A549 (cell line): ENCODE measurements at regions of chr2 and their contacts with region 1.

Region 1: DNA sequence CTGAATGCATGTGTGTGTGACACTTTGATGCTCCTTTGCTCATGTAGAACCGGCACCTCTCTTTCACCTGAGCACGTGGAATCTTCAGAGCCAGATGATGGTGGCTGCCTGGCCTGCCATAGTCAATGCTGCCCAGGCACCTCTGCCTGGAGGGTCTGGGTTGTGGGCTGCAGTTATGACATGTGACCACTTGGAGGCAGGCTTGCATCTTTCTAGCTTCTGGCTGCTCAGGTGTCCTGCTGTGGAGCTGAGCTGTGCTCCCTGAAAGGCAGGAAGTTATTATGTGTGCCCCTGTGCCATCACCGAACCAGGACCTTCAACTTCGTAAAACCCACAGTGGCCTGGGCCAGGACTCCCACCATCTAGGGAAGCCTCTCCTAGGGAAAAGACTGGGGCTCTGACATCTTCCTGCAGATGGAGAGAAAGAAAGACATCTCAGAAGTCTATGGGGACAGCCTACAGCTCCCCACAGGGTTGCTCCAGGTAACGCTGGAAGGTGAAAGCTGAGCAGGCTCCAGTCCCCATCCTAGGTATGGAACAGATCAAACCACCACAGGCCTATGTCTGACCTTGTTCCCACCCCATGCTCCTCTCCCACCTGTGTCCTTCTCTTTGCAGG is 30.2 kb downstream of the PSD4 start:
- DNase-seq: peak; percentile 82 to 86
- ATAC-seq: peak; percentile 71 to 80
- H3K4me3 ChIP-seq: no peak overlapping the region
- H3K27ac ChIP-seq: peak overlapping the region; percentile 92 to 97
- H3K4me1 ChIP-seq: peaks cover 77% of the 10 kb centered on the region
- CTCF ChIP-seq: peak; percentile 96
- EP300 ChIP-seq: no peak
- POLR2A ChIP-seq: no peak
- RAD21 ChIP-seq: peak; percentile 99

Region 2: DNA sequence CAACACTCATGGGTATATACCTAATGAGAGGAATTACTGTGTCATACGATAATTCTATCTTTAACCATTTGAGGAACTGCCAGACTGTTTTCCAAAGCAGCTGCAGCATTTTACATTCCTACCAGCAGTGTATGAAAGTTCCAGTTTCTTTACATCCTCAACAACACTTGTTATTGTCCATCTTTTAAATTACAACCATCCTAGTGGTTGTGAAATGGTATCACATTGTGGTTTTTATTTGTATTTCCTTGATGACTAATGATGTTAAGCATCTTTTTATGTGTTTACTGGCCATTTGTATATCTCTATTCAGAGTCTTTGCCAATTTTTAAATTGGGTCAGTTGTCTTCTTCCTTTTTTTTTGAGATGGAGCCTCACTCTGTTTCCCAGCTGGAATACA is 435.6 kb before region 1 on chr2:
- CTCF ChIA-PET with region 1: no interaction called
- POLR2A ChIA-PET with region 1: no interaction called
- DNase-seq: peak in 1 of 2 experiments; percentile 50
- ATAC-seq: no peak
- H3K4me3 ChIP-seq: no peak overlapping the region
- H3K27ac ChIP-seq: no peak overlapping the region
- H3K4me1 ChIP-seq: peaks cover 14% of the 10 kb centered on the region; the same call in 2 of the 3 replicates
- CTCF ChIP-seq: no peak
- EP300 ChIP-seq: no peak
- POLR2A ChIP-seq: no peak
- RAD21 ChIP-seq: no peak

Region 3: DNA sequence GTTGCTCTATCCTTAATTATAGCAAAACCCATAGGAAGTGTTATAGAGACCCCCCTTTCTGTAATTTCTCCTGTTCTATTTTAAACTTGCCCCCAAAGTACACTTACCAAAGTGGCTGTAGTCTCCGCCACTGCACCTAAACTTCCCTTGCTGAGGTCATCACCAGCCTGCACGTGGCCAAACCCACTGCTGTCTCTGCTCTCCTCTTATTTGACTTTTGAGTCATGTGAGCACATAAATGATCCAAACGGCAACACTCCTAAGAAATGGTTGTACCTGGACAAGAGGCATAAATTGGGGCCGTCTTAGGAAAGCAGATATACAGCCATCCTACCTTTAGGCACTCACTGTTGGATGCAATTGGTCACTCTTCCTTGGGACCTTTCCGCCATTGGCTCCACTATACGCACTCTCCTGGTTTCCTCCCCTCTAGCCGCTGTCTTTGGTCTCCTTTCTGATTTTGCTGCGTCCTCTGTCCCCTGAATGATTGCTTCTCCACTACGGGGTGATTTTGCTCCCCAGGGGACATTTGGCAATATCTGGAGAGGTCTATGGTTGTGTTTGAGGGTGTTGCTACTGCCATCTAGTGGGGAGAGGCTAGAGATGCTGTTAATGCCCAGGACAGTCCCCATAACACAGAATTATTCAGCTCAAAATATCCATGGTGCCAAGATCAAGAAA is 245.4 kb before region 1 on chr2:
- CTCF ChIA-PET with region 1: no interaction called
- POLR2A ChIA-PET with region 1: no interaction called
- DNase-seq: peak; percentile 48 to 60
- ATAC-seq: peak; percentile 82 to 96
- H3K4me3 ChIP-seq: no peak overlapping the region
- H3K27ac ChIP-seq: no peak overlapping the region
- H3K4me1 ChIP-seq: no peaks in the 10 kb centered on the region
- CTCF ChIP-seq: peak; percentile 82
- EP300 ChIP-seq: no peak
- POLR2A ChIP-seq: no peak
- RAD21 ChIP-seq: peak; percentile 67 to 72

Region 4: DNA sequence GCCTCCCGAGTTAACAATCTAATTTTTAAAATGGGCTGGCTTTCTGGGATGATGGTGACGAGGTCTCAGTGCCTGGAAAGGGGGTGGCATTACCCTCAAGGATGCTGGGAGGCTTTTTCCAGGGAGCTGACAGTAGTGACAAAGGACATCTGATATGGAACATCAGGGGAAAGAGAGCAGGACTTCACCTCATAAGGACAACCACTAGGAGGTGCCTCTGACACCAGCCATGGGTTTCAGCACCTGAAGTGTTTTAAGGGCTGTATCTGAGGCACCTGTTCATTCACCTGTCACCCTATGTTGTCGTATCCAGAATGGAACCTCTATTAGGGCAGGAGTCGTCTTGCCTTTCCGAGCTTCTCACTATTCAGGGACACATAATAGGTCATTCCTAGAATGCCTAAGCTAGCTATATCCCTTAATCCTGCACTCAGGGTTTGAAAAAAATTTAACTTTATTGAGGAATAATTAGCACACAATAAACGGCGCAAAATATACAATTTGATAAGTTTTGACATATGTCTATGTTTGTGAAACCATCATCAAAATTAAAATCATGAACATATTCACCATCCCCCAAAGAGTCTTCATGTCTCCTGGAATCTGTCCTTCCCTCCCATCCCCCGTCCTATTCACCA is 162.0 kb before region 1 on chr2:
- CTCF ChIA-PET with region 1: no interaction called
- POLR2A ChIA-PET with region 1: no interaction called
- DNase-seq: peak in 1 of 2 experiments; percentile 11
- ATAC-seq: peak; percentile 47 to 66; a peak in 4 of 6 replicates
- H3K4me3 ChIP-seq: no peak overlapping the region
- H3K27ac ChIP-seq: no peak overlapping the region
- H3K4me1 ChIP-seq: no peaks in the 10 kb centered on the region
- CTCF ChIP-seq: no peak
- EP300 ChIP-seq: no peak
- POLR2A ChIP-seq: no peak
- RAD21 ChIP-seq: peak in 1 of 2 experiments; percentile 10; a peak in 1 of 5 replicates

Region 5: GRCh38 chr2:113080134-113080533 is 123.9 kb before region 1 on chr2:
- CTCF ChIA-PET with region 1: interaction called, 150 read pairs
- POLR2A ChIA-PET with region 1: interaction called, 7 read pairs
- DNase-seq: peak; percentile 31 to 32
- ATAC-seq: peak; percentile 70 to 91; a peak in 5 of 6 replicates
- H3K4me3 ChIP-seq: no peak overlapping the region
- H3K27ac ChIP-seq: no peak overlapping the region
- H3K4me1 ChIP-seq: peaks cover 3% of the 10 kb centered on the region; the same call in 1 of the 3 replicates
- CTCF ChIP-seq: peak; percentile 80
- EP300 ChIP-seq: no peak
- POLR2A ChIP-seq: no peak
- RAD21 ChIP-seq: peak; percentile 86 to 88

Region 6: GRCh38 chr2:113219889-113220641 is 16.1 kb after region 1 on chr2:
- CTCF ChIA-PET with region 1: interaction called, 28 read pairs
- POLR2A ChIA-PET with region 1: interaction called, 4 read pairs
- DNase-seq: peak; percentile 64 to 92
- ATAC-seq: peak; percentile 54 to 73
- H3K4me3 ChIP-seq: peak overlapping the region; percentile 31
- H3K27ac ChIP-seq: peak overlapping the region; percentile 96
- H3K4me1 ChIP-seq: peaks cover 67% of the 10 kb centered on the region
- CTCF ChIP-seq: no peak
- EP300 ChIP-seq: no peak
- POLR2A ChIP-seq: peak; percentile 62
- RAD21 ChIP-seq: no peak

Region 7: GRCh38 chr2:113233593-113234550 is 29.9 kb after region 1 on chr2:
- CTCF ChIA-PET with region 1: interaction called, 71 read pairs
- POLR2A ChIA-PET with region 1: no interaction called
- DNase-seq: peak; percentile 37 to 52
- ATAC-seq: peak; percentile 76 to 87
- H3K4me3 ChIP-seq: no peak overlapping the region
- H3K27ac ChIP-seq: peak overlapping the region; percentile 50 to 64
- H3K4me1 ChIP-seq: peaks cover 44% of the 10 kb centered on the region
- CTCF ChIP-seq: no peak
- EP300 ChIP-seq: no peak
- POLR2A ChIP-seq: no peak
- RAD21 ChIP-seq: no peak

Region 8: GRCh38 chr2:113248997-113249770 is 45.2 kb after region 1 on chr2:
- CTCF ChIA-PET with region 1: interaction called, 118 read pairs
- POLR2A ChIA-PET with region 1: no interaction called
- DNase-seq: peak; percentile 67 to 83
- ATAC-seq: peak; percentile 67 to 92; a peak in 4 of 6 replicates
- H3K4me3 ChIP-seq: no peak overlapping the region
- H3K27ac ChIP-seq: peak overlapping the region; percentile 97 to 98
- H3K4me1 ChIP-seq: peaks cover 24% of the 10 kb centered on the region
- CTCF ChIP-seq: peak; percentile 82
- EP300 ChIP-seq: no peak
- POLR2A ChIP-seq: no peak
- RAD21 ChIP-seq: peak; percentile 95 to 97

Region 9: GRCh38 chr2:113266431-113266830 is 62.4 kb after region 1 on chr2:
- CTCF ChIA-PET with region 1: interaction called, 14 read pairs
- POLR2A ChIA-PET with region 1: no interaction called
- DNase-seq: no peak
- ATAC-seq: no peak
- H3K4me3 ChIP-seq: no peak overlapping the region
- H3K27ac ChIP-seq: no peak overlapping the region; a peak in 1 of 6 replicates
- H3K4me1 ChIP-seq: peaks cover 3% of the 10 kb centered on the region; the same call in 1 of the 3 replicates
- CTCF ChIP-seq: no peak
- EP300 ChIP-seq: no peak
- POLR2A ChIP-seq: no peak
- RAD21 ChIP-seq: no peak

Region 10: GRCh38 chr2:113370478-113371091 is 166.6 kb after region 1 on chr2:
- CTCF ChIA-PET with region 1: interaction called, 113 read pairs
- POLR2A ChIA-PET with region 1: no interaction called
- DNase-seq: peak; percentile 67 to 89
- ATAC-seq: peak; percentile 96 to 99
- H3K4me3 ChIP-seq: no peak overlapping the region
- H3K27ac ChIP-seq: peak overlapping the region; percentile 70 to 84
- H3K4me1 ChIP-seq: peaks cover 36% of the 10 kb centered on the region
- CTCF ChIP-seq: peak; percentile 91
- EP300 ChIP-seq: no peak
- POLR2A ChIP-seq: no peak
- RAD21 ChIP-seq: peak; percentile 98 to 99

Region 11: DNA sequence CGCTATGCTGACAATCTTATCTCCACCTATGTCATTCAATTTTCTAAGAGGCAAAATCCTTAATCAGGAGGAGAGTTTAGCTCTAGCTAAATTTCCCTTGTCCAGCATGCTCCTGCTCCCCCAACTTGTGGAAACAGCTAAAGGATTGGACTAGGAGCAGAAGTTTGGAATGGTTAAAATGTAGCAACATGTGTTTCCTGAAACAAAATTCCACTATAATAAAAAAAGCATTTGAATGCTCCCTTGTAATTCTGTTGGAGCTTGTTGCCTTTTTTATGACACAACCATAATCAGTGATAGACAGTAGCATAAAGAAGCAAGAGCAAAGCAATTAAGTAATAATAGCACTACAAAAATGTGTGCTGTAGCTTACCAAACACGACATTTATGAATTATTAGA is 692.8 kb after region 1 on chr2:
- CTCF ChIA-PET with region 1: no interaction called
- POLR2A ChIA-PET with region 1: no interaction called
- DNase-seq: no peak
- ATAC-seq: no peak
- H3K4me3 ChIP-seq: no peak overlapping the region
- H3K27ac ChIP-seq: peak overlapping the region in 1 of 2 experiments; percentile 22; a peak in 1 of 6 replicates
- H3K4me1 ChIP-seq: peaks cover 91% of the 10 kb centered on the region
- CTCF ChIP-seq: no peak
- EP300 ChIP-seq: no peak
- POLR2A ChIP-seq: no peak
- RAD21 ChIP-seq: no peak